ENCODE measurements at regions of chr5 and their contacts with region 1.

Region 1: DNA sequence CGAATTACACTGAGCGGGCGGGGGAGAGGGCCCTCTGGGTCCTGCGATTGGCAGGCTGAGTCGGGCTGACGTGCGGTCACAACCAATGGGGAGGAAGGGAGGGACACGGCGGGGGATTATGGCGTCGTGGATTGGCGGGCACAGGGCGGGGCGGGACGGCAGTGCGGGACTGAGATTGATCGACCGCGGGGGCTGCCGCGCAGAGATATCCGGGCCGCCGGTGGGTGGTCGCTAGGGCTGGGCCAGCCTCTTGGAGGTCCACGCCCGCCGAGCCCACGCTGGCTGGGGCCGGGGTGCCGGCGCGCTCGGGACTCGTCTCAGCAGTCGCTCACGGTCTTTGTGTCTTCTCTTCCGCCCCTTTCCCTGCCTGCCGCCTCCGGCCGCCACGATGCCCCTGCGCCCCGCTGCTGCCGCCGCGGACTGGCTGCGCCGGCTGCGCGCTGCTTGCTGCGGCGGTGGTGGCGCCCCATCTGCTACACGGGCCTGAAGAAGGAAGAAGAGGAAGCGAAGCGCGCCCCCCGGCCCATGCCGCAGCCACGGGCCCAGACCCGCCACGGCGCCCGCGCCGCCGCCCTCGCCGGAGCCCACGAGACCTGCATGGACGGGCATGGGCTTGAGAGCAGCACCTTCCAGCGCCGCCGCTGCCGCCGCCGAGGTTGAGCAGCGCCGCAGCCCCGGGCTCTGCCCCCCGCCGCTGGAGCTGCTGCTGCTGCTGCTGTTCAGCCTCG is at the start of gene RGMB:
- DNase-seq: peak; percentile 96
- ATAC-seq: peak; percentile 88
- H3K4me3 ChIP-seq: peak within 1 kb of the TSS; percentile 55 to 94 (median 78)
- H3K4me3 Mint-ChIP-seq: peak within 1 kb of the TSS; percentile 96
- H3K27ac ChIP-seq: peak within 1 kb of the TSS; percentile 63 to 78
- H3K27ac Mint-ChIP-seq: peak within 1 kb of the TSS; percentile 93
- H3K4me1 ChIP-seq: peaks cover 38 to 53% of the 10 kb centered on the region in 2 donors
- H3K4me1 Mint-ChIP-seq: peaks cover 56% of the 10 kb centered on the region
- H3K27me3 ChIP-seq: peaks cover 0 to 17% (median 8%) of the 10 kb centered on the region in 4 experiments
- H3K27me3 Mint-ChIP-seq: peaks cover under 1% of the 10 kb centered on the region
- CTCF ChIP-seq: no peak
- total RNA-seq, gene RGMB: 17.1 and 18.3 TPM in 2 replicates

Region 2: DNA sequence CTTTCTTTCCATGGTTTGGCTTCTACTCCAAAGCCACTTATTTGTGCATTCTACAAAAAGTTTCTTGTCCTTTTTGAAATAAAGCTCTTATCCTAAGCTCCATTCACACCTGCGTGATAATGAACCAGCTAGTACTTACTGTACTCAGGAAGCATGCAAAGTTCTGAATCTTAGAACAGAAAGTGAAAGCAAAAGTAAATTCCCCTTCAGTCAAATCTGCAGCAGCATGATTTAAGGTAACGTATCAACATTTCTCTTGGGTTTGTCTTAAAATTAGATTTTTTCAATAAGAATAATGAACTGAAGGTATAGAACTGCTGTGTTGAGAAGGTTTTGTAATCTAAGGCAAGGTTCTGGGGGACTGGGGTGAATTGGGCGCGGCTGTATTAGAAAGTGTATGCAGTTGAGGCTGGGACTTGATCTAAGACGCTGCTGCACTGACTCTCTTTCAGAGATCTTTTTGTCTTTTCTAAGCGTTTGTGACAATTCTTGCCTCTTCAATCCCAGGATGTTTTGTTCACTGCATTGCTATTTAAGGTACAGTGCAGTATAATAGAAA is 1897.3 kb before region 1 on chr5 and contains the start of gene ERAP2:
- CTCF ChIA-PET with region 1: no interaction called
- POLR2A ChIA-PET with region 1: no interaction called
- intact Hi-C with region 1: loop called (anchors 10 kb)
- DNase-seq: peak; percentile 76
- ATAC-seq: peak; percentile 65
- H3K4me3 ChIP-seq: peak within 1 kb of the TSS; percentile 66 to 100 (median 84)
- H3K4me3 Mint-ChIP-seq: peak within 1 kb of the TSS; percentile 97
- H3K27ac ChIP-seq: peak within 1 kb of the TSS; percentile 69 to 75
- H3K27ac Mint-ChIP-seq: peak within 1 kb of the TSS; percentile 92
- H3K4me1 ChIP-seq: peaks cover 50 to 53% of the 10 kb centered on the region in 2 donors
- H3K4me1 Mint-ChIP-seq: peaks cover 74% of the 10 kb centered on the region
- H3K27me3 ChIP-seq: no peaks in the 10 kb centered on the region
- H3K27me3 Mint-ChIP-seq: no peaks in the 10 kb centered on the region
- CTCF ChIP-seq: no peak
- total RNA-seq, gene ERAP2: 74.2 and 76.5 TPM in 2 replicates

Region 3: GRCh38 chr5:98786191-98786853 is 12.7 kb after region 1 on chr5:
- CTCF ChIA-PET with region 1: interaction called, 89 read pairs
- POLR2A ChIA-PET with region 1: no interaction called
- intact Hi-C with region 1: no loop called
- DNase-seq: no peak
- ATAC-seq: no peak
- H3K4me3 ChIP-seq: no peak overlapping the region
- H3K4me3 Mint-ChIP-seq: no peak overlapping the region
- H3K27ac ChIP-seq: no peak overlapping the region
- H3K27ac Mint-ChIP-seq: no peak overlapping the region
- H3K4me1 ChIP-seq: no peaks in the 10 kb centered on the region
- H3K4me1 Mint-ChIP-seq: peaks cover 30% of the 10 kb centered on the region
- H3K27me3 ChIP-seq: no peaks in the 10 kb centered on the region
- H3K27me3 Mint-ChIP-seq: no peaks in the 10 kb centered on the region
- CTCF ChIP-seq: no peak

Region 4: DNA sequence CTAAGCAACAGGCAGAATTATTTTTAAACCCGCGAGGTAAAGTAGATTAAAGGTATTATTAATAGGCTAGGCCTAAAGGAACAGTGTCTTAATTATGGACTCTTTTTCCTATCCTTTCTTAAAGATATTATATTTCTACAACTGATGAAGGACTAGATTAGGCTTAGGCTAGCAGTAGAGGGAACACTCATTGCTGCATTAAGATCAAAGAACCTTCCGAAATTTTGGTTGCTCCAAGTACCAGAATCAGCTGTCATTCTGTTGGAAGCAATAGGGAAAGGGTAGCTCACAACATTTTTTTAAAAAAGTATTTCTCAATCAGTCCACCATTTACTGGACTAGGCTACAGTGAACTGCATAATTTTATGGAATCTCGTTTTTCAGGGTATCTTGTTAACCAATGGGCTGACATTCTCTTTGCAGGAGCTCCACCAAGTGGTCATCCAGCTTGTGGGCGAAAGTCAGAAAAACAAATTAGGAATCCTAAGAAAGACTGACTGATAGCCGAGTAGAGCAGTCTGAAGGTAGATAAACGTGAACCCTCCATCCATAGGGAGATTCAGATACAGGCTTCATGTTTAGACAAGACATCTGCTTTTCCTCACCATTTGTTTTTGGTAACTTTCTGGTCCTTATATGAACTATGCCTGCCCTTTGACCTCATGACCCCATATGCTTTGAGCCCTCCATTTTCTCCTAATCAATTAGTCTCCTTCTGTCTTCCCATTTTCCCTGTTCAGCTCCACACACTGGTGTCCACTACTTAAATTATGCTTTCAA is 258.8 kb after region 1 on chr5:
- CTCF ChIA-PET with region 1: interaction called, 6 read pairs
- POLR2A ChIA-PET with region 1: no interaction called
- intact Hi-C with region 1: loop called (anchors 1 kb)
- DNase-seq: peak; percentile 73
- ATAC-seq: peak; percentile 56
- H3K4me3 ChIP-seq: peak overlapping the region in 2 of 5 experiments; percentile 38 to 60
- H3K4me3 Mint-ChIP-seq: peak overlapping the region; percentile 92
- H3K27ac ChIP-seq: peak overlapping the region; percentile 60 to 82
- H3K27ac Mint-ChIP-seq: peak overlapping the region; percentile 93
- H3K4me1 ChIP-seq: peaks cover 52 to 54% of the 10 kb centered on the region in 2 donors
- H3K4me1 Mint-ChIP-seq: peaks cover 80% of the 10 kb centered on the region
- H3K27me3 ChIP-seq: no peaks in the 10 kb centered on the region
- H3K27me3 Mint-ChIP-seq: no peaks in the 10 kb centered on the region
- CTCF ChIP-seq: peak; percentile 42

Measured in B cell (primary cell).